CD4-positive, alpha-beta T cell (primary cell): ENCODE measurements at regions of chr11 and their contacts with region 1.

Region 1: GRCh38 chr11:63671322-63672155 is at the start of gene ATL3:
- DNase-seq: peak; percentile 88 to 98 (median 96)
- ATAC-seq: peak; percentile 93
- H3K4me3 ChIP-seq: peak within 1 kb of the TSS; percentile 80
- H3K4me3 Mint-ChIP-seq: peak within 1 kb of the TSS; percentile 88
- H3K27ac ChIP-seq: peak within 1 kb of the TSS; percentile 64 to 75
- H3K27ac Mint-ChIP-seq: peak within 1 kb of the TSS; percentile 82
- H3K4me1 ChIP-seq: peaks cover 23% of the 10 kb centered on the region
- H3K4me1 Mint-ChIP-seq: peaks cover 31% of the 10 kb centered on the region
- H3K27me3 ChIP-seq: no peaks in the 10 kb centered on the region
- H3K27me3 Mint-ChIP-seq: no peaks in the 10 kb centered on the region
- CTCF ChIP-seq: peak; percentile 11
- total RNA-seq, gene ATL3: 14.5 to 16.5 TPM

Region 2: GRCh38 chr11:63427971-63428508 is 243.5 kb before region 1 on chr11:
- CTCF ChIA-PET with region 1: no interaction called
- POLR2A ChIA-PET with region 1: no interaction called
- intact Hi-C with region 1: no loop called
- DNase-seq: no peak
- ATAC-seq: no peak
- H3K4me3 ChIP-seq: no peak overlapping the region
- H3K4me3 Mint-ChIP-seq: no peak overlapping the region
- H3K27ac ChIP-seq: no peak overlapping the region
- H3K27ac Mint-ChIP-seq: no peak overlapping the region
- H3K4me1 ChIP-seq: no peaks in the 10 kb centered on the region
- H3K4me1 Mint-ChIP-seq: no peaks in the 10 kb centered on the region
- H3K27me3 ChIP-seq: peaks cover 6 to 10% of the 10 kb centered on the region in 2 experiments
- H3K27me3 Mint-ChIP-seq: peaks cover 42% of the 10 kb centered on the region
- CTCF ChIP-seq: no peak

Region 3: GRCh38 chr11:63530021-63530420 is 141.5 kb before region 1 on chr11:
- CTCF ChIA-PET with region 1: interaction called, 4 read pairs
- POLR2A ChIA-PET with region 1: no interaction called
- intact Hi-C with region 1: loop called in 1 of 2 experiments (anchors 2 kb)
- DNase-seq: no peak
- ATAC-seq: no peak
- H3K4me3 ChIP-seq: no peak overlapping the region
- H3K4me3 Mint-ChIP-seq: no peak overlapping the region
- H3K27ac ChIP-seq: no peak overlapping the region
- H3K27ac Mint-ChIP-seq: peak overlapping the region; percentile 74
- H3K4me1 ChIP-seq: peaks cover 49% of the 10 kb centered on the region
- H3K4me1 Mint-ChIP-seq: peaks cover 68% of the 10 kb centered on the region
- H3K27me3 ChIP-seq: no peaks in the 10 kb centered on the region
- H3K27me3 Mint-ChIP-seq: no peaks in the 10 kb centered on the region
- CTCF ChIP-seq: no peak

Region 4: DNA sequence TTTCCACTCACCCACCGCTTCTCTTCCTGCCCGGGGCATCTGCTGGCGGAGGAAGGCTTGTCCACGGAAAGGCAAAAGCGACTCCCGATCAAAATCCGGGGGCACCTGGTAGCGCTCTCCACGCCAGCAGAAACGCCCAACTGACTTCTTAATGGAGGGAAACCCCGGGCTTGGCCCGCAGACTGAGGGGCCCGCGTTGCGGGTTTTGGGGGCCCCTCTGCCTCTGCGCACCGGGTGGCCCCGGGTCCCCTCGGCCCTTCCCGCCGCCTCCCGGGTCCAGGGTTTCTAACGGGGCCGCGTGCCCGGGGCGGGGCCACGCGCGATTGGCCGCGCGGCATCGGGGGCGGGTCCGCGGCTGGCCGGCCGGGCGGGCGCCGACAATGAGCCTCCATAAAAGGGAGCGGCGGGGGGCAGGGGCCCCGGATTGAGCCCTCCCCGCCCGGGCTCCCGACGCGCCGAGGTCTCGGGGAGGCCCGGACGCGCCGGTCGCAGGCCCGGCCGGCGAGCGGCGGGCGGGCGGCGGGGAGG is 141.6 kb after region 1 on chr11 and contains the start of gene SPINDOC:
- CTCF ChIA-PET with region 1: no interaction called
- POLR2A ChIA-PET with region 1: no interaction called
- intact Hi-C with region 1: loop called in 1 of 2 experiments (anchors 5 kb)
- DNase-seq: peak; percentile 28 to 85 (median 62)
- ATAC-seq: peak; percentile 85
- H3K4me3 ChIP-seq: peak within 1 kb of the TSS; percentile 97
- H3K4me3 Mint-ChIP-seq: peak within 1 kb of the TSS; percentile 81
- H3K27ac ChIP-seq: no peak within 1 kb of the TSS
- H3K27ac Mint-ChIP-seq: peak within 1 kb of the TSS; percentile 1
- H3K4me1 ChIP-seq: peaks cover 17% of the 10 kb centered on the region
- H3K4me1 Mint-ChIP-seq: peaks cover 20% of the 10 kb centered on the region
- H3K27me3 ChIP-seq: no peaks in the 10 kb centered on the region
- H3K27me3 Mint-ChIP-seq: no peaks in the 10 kb centered on the region
- CTCF ChIP-seq: no peak
- total RNA-seq, gene SPINDOC: 4.0 to 4.8 TPM

Region 5: DNA sequence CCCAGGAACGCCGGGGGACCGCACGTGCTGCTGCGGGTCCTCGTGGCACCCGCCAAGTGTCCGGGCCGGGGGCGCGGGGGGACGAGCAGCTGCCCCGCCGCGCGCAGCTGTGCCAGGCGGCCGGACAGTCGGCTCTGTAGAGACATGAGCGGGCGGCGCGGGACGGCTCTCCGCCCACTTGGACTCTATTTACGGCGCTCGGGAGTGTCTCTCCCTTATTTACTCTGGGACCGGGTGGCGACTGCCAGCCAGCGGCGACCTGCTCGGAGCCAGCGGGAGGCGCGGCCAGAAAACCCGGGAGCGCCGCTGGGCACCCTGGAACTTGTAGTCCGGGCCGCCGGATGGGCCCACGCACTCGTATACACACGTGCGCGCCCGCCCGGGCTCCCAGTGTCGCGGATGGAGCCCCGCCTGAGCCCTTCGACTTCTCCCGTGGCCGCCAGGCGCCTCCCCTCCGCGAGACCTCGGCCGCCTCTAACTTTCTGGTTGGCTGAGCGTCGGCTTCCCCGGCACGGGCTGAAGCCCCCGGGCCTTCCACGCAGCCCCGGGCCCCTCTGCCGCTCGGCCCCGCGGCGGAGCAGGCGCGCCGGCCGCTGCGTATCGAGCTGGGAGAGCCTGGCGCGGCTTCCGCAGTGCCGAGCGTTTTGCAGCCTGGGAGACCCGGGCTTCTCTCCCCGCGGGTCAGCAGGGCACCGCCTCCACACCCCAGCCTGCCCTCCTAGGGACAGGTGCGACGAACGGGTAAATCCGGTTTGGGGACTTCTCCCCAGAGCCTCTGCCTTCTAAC is 494.5 kb after region 1 on chr11 and contains the start of gene MACROD1:
- CTCF ChIA-PET with region 1: no interaction called
- POLR2A ChIA-PET with region 1: no interaction called
- intact Hi-C with region 1: loop called in 1 of 2 experiments (anchors 10 kb)
- DNase-seq: peak; percentile 51 to 88 (median 70)
- ATAC-seq: peak; percentile 91
- H3K4me3 ChIP-seq: peak within 1 kb of the TSS; percentile 66
- H3K4me3 Mint-ChIP-seq: peak within 1 kb of the TSS; percentile 92
- H3K27ac ChIP-seq: no peak within 1 kb of the TSS
- H3K27ac Mint-ChIP-seq: no peak within 1 kb of the TSS
- H3K4me1 ChIP-seq: peaks cover 18% of the 10 kb centered on the region
- H3K4me1 Mint-ChIP-seq: peaks cover 4% of the 10 kb centered on the region
- H3K27me3 ChIP-seq: no peaks in the 10 kb centered on the region
- H3K27me3 Mint-ChIP-seq: no peaks in the 10 kb centered on the region
- CTCF ChIP-seq: no peak
- total RNA-seq, gene MACROD1: 6.0 to 6.3 TPM